ENCODE measurements at regions of chr10 and their contacts with region 1.

Region 1: DNA sequence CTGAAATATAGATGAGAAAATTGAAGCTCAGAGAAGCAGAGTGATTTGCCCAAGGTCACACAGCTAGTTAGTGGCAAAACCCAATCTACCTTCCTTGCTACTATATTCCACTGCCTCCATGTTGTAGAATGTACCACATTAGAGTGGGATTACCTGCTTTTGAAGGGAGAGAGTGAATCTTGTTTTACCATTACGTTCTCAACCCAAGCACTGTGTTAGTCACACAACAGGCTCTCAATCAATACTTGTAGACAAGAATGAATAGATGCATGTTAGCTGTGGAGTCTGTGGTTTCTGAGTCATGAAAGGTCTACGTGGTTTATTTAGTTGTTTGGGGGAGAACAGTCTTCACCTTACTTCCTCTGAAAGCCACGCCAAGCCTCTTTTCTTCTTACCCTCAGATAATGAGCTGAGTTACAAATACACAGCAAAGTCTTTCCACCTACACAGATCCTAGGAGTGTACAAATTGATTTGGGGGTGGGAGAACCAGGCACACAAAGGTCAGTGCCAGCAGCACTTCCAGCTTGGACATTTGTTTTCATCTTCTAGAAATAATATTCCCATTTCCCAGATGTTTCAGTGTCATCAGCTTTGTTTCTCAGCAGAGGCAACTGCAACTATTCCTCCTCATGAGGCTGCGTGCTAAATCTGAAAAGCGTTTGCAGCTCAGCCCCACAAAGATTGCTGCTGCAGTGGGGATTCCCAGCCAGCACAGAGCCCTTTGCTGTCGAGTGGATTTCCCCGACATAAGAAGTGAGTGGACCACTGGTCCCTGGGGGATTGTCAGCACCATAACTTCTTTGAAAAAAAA is 71.5 kb upstream of the ADO start:
- DNase-seq: peak; percentile 80
- ATAC-seq: peak; percentile 75
- H3K4me3 ChIP-seq: no peak overlapping the region
- H3K4me3 Mint-ChIP-seq: no peak overlapping the region
- H3K27ac ChIP-seq: peak overlapping the region in 1 of 2 donors; percentile 79
- H3K27ac Mint-ChIP-seq: peak overlapping the region; percentile 93
- H3K4me1 ChIP-seq: peaks cover 38 to 42% of the 10 kb centered on the region in 2 donors
- H3K4me1 Mint-ChIP-seq: peaks cover 4% of the 10 kb centered on the region
- H3K27me3 ChIP-seq: no peaks in the 10 kb centered on the region
- H3K27me3 Mint-ChIP-seq: no peaks in the 10 kb centered on the region
- CTCF ChIP-seq: no peak

Region 2: GRCh38 chr10:62681211-62681940 is 51.7 kb before region 1 on chr10:
- CTCF ChIA-PET with region 1: interaction called, 3 read pairs
- POLR2A ChIA-PET with region 1: no interaction called
- intact Hi-C with region 1: loop called (anchors 5 kb)
- DNase-seq: peak; percentile 82
- ATAC-seq: peak; percentile 97
- H3K4me3 ChIP-seq: no peak overlapping the region
- H3K4me3 Mint-ChIP-seq: peak overlapping the region; percentile 21
- H3K27ac ChIP-seq: no peak overlapping the region
- H3K27ac Mint-ChIP-seq: peak overlapping the region; percentile 51
- H3K4me1 ChIP-seq: peaks cover 14 to 17% of the 10 kb centered on the region in 2 donors
- H3K4me1 Mint-ChIP-seq: peaks cover 16% of the 10 kb centered on the region
- H3K27me3 ChIP-seq: no peaks in the 10 kb centered on the region
- H3K27me3 Mint-ChIP-seq: peaks cover 4% of the 10 kb centered on the region
- CTCF ChIP-seq: peak; percentile 53

Region 3: DNA sequence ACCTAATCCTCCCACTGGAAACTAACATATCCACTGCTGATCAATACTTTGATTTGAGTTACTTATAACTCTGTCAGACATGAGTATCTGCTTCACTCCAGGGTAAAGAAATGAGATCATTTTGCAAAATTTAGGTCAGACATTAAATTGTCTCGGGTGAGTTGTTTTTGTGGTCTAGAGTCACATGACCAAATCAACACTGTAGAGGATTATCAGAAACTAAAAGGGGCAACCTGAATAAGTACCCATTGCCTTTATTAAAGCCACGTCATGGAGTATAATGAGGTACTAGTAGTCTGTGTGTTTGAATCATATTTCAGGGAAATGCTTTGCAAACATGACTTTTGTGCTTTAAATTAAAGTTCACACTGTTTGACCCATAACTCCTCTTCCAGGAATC is 36.2 kb before region 1 on chr10:
- CTCF ChIA-PET with region 1: no interaction called
- POLR2A ChIA-PET with region 1: no interaction called
- intact Hi-C with region 1: loop called (anchors 5 kb)
- DNase-seq: peak; percentile 46
- ATAC-seq: peak; percentile 57
- H3K4me3 ChIP-seq: no peak overlapping the region
- H3K4me3 Mint-ChIP-seq: no peak overlapping the region
- H3K27ac ChIP-seq: no peak overlapping the region
- H3K27ac Mint-ChIP-seq: peak overlapping the region; percentile 11
- H3K4me1 ChIP-seq: peaks cover 12 to 13% of the 10 kb centered on the region in 2 donors
- H3K4me1 Mint-ChIP-seq: peaks cover 12% of the 10 kb centered on the region
- H3K27me3 ChIP-seq: no peaks in the 10 kb centered on the region
- H3K27me3 Mint-ChIP-seq: no peaks in the 10 kb centered on the region
- CTCF ChIP-seq: no peak

Region 4: GRCh38 chr10:62804356-62805230 is 71.5 kb after region 1 on chr10 and contains the start of gene ADO:
- CTCF ChIA-PET with region 1: interaction called, 3 read pairs
- POLR2A ChIA-PET with region 1: interaction called, 3 read pairs
- intact Hi-C with region 1: loop called (anchors 1 kb)
- DNase-seq: peak; percentile 92
- ATAC-seq: peak; percentile 87
- H3K4me3 ChIP-seq: peak within 1 kb of the TSS; percentile 79 to 99 (median 92)
- H3K4me3 Mint-ChIP-seq: peak within 1 kb of the TSS; percentile 98
- H3K27ac ChIP-seq: peak within 1 kb of the TSS; percentile 96 to 98
- H3K27ac Mint-ChIP-seq: peak within 1 kb of the TSS; percentile 99
- H3K4me1 ChIP-seq: peaks cover 26 to 29% of the 10 kb centered on the region in 2 donors
- H3K4me1 Mint-ChIP-seq: peaks cover 44% of the 10 kb centered on the region
- H3K27me3 ChIP-seq: no peaks in the 10 kb centered on the region
- H3K27me3 Mint-ChIP-seq: no peaks in the 10 kb centered on the region
- CTCF ChIP-seq: no peak
- total RNA-seq, gene ADO: 18.4 and 19.1 TPM in 2 replicates

Region 5: GRCh38 chr10:64170791-64171190 is 1437.7 kb after region 1 on chr10:
- CTCF ChIA-PET with region 1: no interaction called
- POLR2A ChIA-PET with region 1: no interaction called
- intact Hi-C with region 1: no loop called
- DNase-seq: no peak
- ATAC-seq: no peak
- H3K4me3 ChIP-seq: no peak overlapping the region
- H3K4me3 Mint-ChIP-seq: no peak overlapping the region
- H3K27ac ChIP-seq: no peak overlapping the region
- H3K27ac Mint-ChIP-seq: no peak overlapping the region
- H3K4me1 ChIP-seq: no peaks in the 10 kb centered on the region
- H3K4me1 Mint-ChIP-seq: no peaks in the 10 kb centered on the region
- H3K27me3 ChIP-seq: no peaks in the 10 kb centered on the region
- H3K27me3 Mint-ChIP-seq: no peaks in the 10 kb centered on the region
- CTCF ChIP-seq: no peak